Naive thymus-derived CD8-positive, alpha-beta T cell (primary cell): ENCODE measurements at regions of chr1 and their contacts with region 1.

Region 1: DNA sequence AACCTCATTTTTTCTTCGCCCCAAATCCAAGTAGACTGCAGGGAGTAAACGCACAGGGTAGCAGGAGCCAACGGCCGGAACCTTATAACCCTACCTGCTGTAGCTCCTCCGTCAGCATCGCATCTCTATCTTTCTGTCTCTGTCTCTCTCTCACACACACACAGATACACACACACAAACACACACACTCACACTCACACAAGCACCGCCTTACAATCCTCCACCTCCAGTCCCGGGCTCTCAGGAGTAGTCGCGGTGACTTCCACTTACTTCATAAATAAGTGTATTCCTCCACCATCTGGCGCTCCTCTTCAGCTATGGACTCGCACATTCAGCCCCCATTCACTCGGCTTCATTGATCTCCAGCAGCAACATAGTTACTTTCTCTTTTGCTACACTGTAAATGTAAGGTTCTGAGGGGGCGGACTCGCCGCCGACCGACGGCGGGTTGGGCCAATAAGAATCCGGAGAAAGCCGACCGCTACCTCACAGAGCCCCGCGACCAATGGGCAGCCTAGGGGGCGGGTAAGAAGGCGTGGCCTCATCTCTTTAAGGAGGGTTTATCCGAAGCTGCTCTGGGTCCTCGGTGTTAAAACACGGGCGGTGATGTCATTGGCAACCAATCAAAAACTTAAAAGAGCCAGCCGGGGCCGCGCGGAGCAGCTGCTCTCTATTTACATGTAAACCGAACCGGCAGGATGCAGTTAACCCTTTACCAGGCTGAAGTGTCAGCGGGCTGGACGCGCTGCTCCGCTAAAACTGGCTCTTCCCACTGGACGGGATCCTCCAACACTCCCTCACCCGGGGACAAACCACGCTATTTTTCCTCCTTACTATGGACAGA is at the start of gene DUSP10:
- DNase-seq: peak; percentile 90 to 100 (median 99)
- ATAC-seq: peak; percentile 81 to 85
- H3K4me3 Mint-ChIP-seq: peak within 1 kb of the TSS in 3 of 10 donors; percentile 39 to 86 (median 70)
- H3K27ac Mint-ChIP-seq: peak within 1 kb of the TSS in 5 of 10 donors; percentile 49 to 94 (median 73)
- H3K4me1 Mint-ChIP-seq: peaks cover 9 to 30% (median 19%) of the 10 kb centered on the region in 4 donors
- H3K27me3 Mint-ChIP-seq: no peaks in the 10 kb centered on the region
- polyA plus RNA-seq, gene DUSP10: 1.4 to 4.4 (median 2.5) TPM

Region 2: DNA sequence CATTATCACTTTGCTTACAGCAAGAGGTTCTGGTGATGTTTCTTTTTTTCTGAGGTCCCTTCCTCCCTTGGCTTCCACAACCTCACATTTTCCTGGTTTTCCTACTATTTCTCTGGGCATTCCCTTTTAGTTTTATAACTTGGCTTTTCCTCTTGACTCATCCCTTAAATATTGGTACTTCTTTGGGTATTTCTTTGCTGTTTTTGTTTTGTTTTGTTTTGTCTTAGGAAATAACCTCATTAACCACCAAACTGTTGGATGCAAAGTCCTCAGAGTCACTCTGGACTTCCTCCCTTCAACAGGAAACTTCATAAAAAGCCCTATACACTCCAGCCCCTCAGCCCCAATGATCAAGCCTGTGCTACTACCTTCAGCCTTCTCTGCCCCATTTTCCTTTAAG is 211.1 kb before region 1 on chr1:
- POLR2A ChIA-PET with region 1: no interaction called
- DNase-seq: no peak
- ATAC-seq: no peak
- H3K4me3 Mint-ChIP-seq: no peak overlapping the region
- H3K27ac Mint-ChIP-seq: no peak overlapping the region
- H3K4me1 Mint-ChIP-seq: peaks cover 0 to 2% (median 0%) of the 10 kb centered on the region in 4 donors
- H3K27me3 Mint-ChIP-seq: peaks cover 12 to 31% (median 17%) of the 10 kb centered on the region in 5 donors

Region 3: GRCh38 chr1:221712198-221712684 is 29.7 kb before region 1 on chr1:
- POLR2A ChIA-PET with region 1: interaction called, 35 read pairs
- DNase-seq: peak in 9 of 10 donors; percentile 14 to 82 (median 63)
- ATAC-seq: peak; percentile 78 to 79
- H3K4me3 Mint-ChIP-seq: peak overlapping the region in 8 of 10 donors; percentile 24 to 84 (median 71)
- H3K27ac Mint-ChIP-seq: peak overlapping the region; percentile 57 to 96 (median 86)
- H3K4me1 Mint-ChIP-seq: peaks cover 30 to 93% (median 71%) of the 10 kb centered on the region in 4 donors
- H3K27me3 Mint-ChIP-seq: peaks cover 0 to 20% (median 3%) of the 10 kb centered on the region in 5 donors

Region 4: DNA sequence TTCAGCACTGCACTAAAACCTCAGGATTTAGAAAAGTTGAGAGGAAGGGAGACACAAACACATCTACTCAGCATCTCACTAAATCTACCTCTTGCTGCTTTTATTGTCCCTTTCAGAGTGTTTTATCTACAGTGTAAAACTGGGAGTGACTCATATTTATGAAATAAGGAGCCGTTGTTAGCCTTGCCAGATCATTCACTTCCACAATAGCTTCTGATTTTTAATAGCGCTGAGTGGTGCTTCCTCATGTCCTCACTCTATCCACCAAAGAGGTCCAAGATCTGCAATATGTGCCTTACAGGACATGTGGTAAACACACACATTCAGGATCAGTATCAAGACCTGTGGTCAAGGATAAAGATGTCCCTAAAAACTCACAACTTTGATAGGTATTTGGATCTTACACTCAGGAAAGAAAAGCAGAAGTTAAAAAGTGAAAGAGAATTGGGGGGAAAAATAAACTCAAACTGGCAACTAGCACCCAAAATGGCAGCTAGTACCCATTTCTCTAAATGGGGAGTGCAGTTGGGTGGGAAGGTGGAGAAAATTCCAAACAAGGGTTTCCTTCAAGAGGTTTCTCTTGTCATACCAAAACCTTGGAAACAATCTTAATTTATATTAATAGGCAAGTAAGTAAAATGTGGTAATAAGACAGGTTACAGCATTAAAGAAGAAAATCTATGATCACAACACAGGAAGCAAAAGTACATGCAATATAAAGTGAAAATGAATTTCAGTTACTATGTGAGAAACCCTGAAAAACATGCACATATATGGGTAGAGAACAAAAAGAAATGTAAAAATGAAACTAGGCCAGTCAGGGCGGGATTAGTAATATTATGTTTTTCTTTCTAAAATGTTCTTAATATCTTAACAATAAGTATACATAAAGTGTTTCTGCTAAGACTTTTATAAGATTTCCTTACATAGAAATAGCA is 15.9 kb before region 1 on chr1:
- POLR2A ChIA-PET with region 1: interaction called, 10 read pairs
- DNase-seq: peak in 2 of 10 donors; percentile 28 to 30
- ATAC-seq: peak; percentile 69 to 78
- H3K4me3 Mint-ChIP-seq: peak overlapping the region in 8 of 10 donors; percentile 28 to 73 (median 50)
- H3K27ac Mint-ChIP-seq: peak overlapping the region; percentile 0 to 84 (median 34)
- H3K4me1 Mint-ChIP-seq: peaks cover 14 to 75% (median 55%) of the 10 kb centered on the region in 4 donors
- H3K27me3 Mint-ChIP-seq: no peaks in the 10 kb centered on the region

Region 5: GRCh38 chr1:221778535-221779142 is 36.7 kb after region 1 on chr1:
- POLR2A ChIA-PET with region 1: interaction called, 10 read pairs
- DNase-seq: peak in 5 of 10 donors; percentile 6 to 39 (median 33)
- ATAC-seq: peak; percentile 58 to 61
- H3K4me3 Mint-ChIP-seq: peak overlapping the region; percentile 11 to 73 (median 61)
- H3K27ac Mint-ChIP-seq: peak overlapping the region; percentile 61 to 90 (median 86)
- H3K4me1 Mint-ChIP-seq: peaks cover 28 to 81% (median 59%) of the 10 kb centered on the region in 4 donors
- H3K27me3 Mint-ChIP-seq: no peaks in the 10 kb centered on the region

Region 6: GRCh38 chr1:221839796-221840395 is 98.0 kb after region 1 on chr1:
- POLR2A ChIA-PET with region 1: no interaction called
- DNase-seq: peak in 4 of 10 donors; percentile 3 to 71 (median 52)
- ATAC-seq: peak; percentile 25 to 77
- H3K4me3 Mint-ChIP-seq: peak overlapping the region in 1 of 10 donors; percentile 41
- H3K27ac Mint-ChIP-seq: peak overlapping the region in 4 of 10 donors; percentile 27 to 78 (median 75)
- H3K4me1 Mint-ChIP-seq: peaks cover 7 to 37% (median 15%) of the 10 kb centered on the region in 4 donors
- H3K27me3 Mint-ChIP-seq: peaks cover 0 to 42% (median 6%) of the 10 kb centered on the region in 5 donors